Ascending aorta (tissue), 2 donors: ENCODE measurements at regions of chr15 and their contacts with region 1.

Region 1: DNA sequence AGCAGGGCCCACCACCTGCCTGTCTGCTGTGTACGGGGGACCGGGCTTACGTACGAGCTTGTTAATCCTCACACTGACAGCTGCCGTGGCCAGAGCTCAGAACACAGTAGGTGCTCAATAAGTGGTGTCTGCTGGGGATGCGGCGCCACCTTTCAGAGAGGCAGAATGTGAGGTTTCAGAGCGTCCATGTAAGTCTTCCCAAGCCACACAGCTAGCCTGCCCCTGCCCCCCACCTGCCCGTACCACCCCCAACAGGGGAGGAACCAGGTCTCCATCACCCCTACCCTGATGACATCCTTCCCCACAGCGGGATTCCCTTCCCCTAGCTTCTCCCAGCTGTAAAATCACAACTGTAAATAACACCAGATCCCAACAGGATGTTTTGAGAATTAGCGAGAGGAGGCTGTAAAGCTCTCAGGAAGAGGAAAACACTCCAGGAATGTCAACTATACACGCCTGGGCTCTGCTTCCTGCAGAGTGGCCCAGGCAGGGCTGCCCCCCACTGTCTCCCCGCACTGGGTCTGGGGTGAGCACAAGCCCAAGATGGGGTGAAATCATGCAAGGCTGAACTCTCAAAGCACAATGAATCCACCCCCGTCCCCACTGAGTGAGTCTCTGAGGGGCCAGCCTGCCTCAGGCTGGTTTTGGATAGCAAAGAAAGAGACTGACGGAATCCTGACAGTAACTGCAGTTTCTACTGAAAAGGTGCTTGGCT is 250.1 kb upstream of the LYSMD4 start:
- DNase-seq: no peak
- H3K4me3 ChIP-seq: no peak overlapping the region
- H3K27ac ChIP-seq: no peak overlapping the region
- H3K4me1 ChIP-seq: no peaks in the 10 kb centered on the region
- H3K27me3 ChIP-seq: no peaks in the 10 kb centered on the region
- CTCF ChIP-seq: no peak

Region 2: DNA sequence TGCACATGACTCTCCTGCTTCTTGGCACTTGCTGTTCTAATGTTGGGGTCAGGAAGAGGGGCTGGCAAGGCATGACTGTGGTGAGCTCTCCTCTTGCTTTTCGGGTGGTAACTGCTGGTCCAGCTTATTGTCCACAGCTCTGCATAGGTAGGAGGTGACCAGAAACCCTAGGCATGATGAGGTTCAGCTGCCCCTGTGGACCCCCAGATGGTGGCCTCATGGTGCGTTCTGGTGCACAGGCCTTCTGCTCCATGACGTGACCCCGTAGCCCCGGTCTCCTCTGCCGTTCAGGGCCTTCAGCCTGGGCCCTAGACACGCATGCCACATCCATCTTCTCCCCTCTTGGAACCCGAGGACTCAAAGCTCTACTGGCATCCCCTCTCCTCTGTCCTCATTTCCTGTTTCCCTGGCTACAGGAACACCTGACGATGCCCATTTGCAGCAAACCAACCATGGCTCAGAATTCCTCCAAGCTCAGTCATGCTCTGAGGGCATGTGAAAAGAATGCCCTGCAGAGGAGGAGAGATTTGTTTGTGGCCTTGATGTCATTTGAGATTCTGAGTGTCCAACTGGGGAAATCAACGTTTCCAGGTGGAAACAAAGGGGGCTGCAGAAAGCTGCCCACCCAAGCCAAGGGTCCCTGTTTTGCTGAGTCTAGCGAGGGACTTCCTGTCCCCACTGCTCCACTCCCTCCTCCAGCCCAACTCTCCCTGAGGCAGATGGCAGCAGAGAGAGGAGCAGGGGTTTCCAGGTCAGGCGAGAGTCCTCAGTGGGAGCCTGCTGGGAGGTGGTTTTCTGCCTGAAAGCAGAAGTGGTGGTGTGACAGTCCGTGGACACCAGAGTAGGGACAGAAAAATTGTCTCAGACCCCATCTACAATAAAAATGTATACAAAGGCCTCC is 51.4 kb before region 1 on chr15:
- intact Hi-C with region 1: no loop called
- DNase-seq: no peak
- H3K4me3 ChIP-seq: no peak overlapping the region
- H3K27ac ChIP-seq: no peak overlapping the region
- H3K4me1 ChIP-seq: no peaks in the 10 kb centered on the region
- H3K27me3 ChIP-seq: no peaks in the 10 kb centered on the region
- CTCF ChIP-seq: no peak

Region 3: GRCh38 chr15:99969261-99969920 is 13.9 kb before region 1 on chr15:
- intact Hi-C with region 1: loop called (anchors 1 kb)
- DNase-seq: no peak
- H3K4me3 ChIP-seq: no peak overlapping the region
- H3K27ac ChIP-seq: no peak overlapping the region
- H3K4me1 ChIP-seq: no peaks in the 10 kb centered on the region
- H3K27me3 ChIP-seq: no peaks in the 10 kb centered on the region
- CTCF ChIP-seq: no peak